ENCODE measurements at regions of chr5 and their contacts with region 1.

Region 1: GRCh38 chr5:14644623-14645237 is 19.8 kb upstream of the OTULIN start:
- DNase-seq: no peak
- H3K4me3 Mint-ChIP-seq: no peak overlapping the region
- H3K27ac Mint-ChIP-seq: no peak overlapping the region
- H3K4me1 Mint-ChIP-seq: peaks cover 2% of the 10 kb centered on the region
- H3K27me3 Mint-ChIP-seq: peaks cover 9% of the 10 kb centered on the region

Region 2: GRCh38 chr5:14351845-14352712 is 292.7 kb before region 1 on chr5:
- CTCF ChIA-PET with region 1: interaction called, 40 read pairs
- intact Hi-C with region 1: loop called (anchors 1 kb)
- DNase-seq: peak; percentile 68
- H3K4me3 Mint-ChIP-seq: no peak overlapping the region
- H3K27ac Mint-ChIP-seq: no peak overlapping the region
- H3K4me1 Mint-ChIP-seq: no peaks in the 10 kb centered on the region
- H3K27me3 Mint-ChIP-seq: no peaks in the 10 kb centered on the region

Region 3: DNA sequence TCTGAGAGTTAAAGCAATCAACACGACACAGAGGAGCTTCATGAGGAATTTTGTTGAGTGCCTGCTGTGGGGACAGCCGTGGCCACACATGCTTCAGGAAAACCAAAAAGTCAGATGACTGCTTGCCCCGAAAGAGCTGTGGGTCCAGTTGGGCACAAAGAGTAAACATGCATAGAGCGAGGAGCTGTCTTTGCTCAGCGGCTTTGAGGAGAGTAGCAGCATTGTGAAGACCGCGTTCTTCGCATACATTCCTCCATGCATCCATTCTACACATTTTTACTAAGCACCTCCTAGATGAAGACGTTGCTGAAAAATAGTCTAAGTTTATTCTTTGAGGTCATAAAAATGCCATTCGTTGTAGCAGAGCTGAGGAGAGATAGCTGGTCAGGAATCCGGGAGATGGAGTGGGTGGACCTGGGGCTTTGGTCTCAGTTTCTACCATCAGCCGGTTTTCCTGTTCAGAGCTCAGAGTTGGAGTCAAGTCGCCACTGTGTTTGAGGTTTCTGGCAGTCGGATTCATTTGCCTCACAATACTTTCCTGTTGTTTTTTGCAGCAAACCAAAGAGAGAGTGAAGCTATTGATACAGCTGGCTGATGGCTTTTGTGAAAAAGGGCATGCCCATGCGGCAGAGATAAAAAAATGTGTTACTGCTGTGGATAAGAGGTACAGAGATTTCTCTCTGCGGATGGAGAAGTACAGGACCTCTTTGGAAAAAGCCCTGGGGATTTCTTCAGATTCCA is 257.7 kb before region 1 on chr5:
- CTCF ChIA-PET with region 1: interaction called, 15 read pairs
- intact Hi-C with region 1: no loop called
- DNase-seq: no peak
- H3K4me3 Mint-ChIP-seq: no peak overlapping the region
- H3K27ac Mint-ChIP-seq: no peak overlapping the region
- H3K4me1 Mint-ChIP-seq: no peaks in the 10 kb centered on the region
- H3K27me3 Mint-ChIP-seq: no peaks in the 10 kb centered on the region

Region 4: GRCh38 chr5:14581333-14581890 is 63.3 kb before region 1 on chr5 and contains the start of gene OTULINL:
- CTCF ChIA-PET with region 1: interaction called, 18 read pairs
- intact Hi-C with region 1: loop called (anchors 5 kb)
- DNase-seq: peak; percentile 91
- H3K4me3 Mint-ChIP-seq: peak within 1 kb of the TSS; percentile 75
- H3K27ac Mint-ChIP-seq: peak within 1 kb of the TSS; percentile 70
- H3K4me1 Mint-ChIP-seq: peaks cover 26% of the 10 kb centered on the region
- H3K27me3 Mint-ChIP-seq: peaks cover 2% of the 10 kb centered on the region
- total RNA-seq, gene OTULINL: 9.1 to 10.6 TPM

Region 5: DNA sequence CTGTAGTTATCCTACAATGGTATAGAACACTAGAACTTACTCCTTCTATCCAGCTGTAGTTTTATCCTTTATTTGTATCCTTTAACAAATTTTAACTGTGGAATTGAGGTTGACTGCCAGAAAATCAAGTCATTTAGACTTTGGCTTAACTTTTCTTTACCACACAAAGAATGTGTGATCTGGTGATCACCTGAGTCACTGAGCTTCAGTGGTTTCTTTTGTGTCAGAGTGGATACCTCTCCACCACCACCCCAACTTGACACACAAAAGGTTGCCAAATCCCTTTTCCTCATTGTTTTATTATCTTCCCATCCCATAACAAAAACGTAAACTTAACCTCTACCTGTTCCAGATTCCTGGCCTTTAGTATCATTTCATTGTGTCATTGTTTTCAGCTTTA is 25.2 kb after region 1 on chr5:
- CTCF ChIA-PET with region 1: interaction called, 10 read pairs
- intact Hi-C with region 1: no loop called
- DNase-seq: peak; percentile 31
- H3K4me3 Mint-ChIP-seq: no peak overlapping the region
- H3K27ac Mint-ChIP-seq: peak overlapping the region; percentile 70
- H3K4me1 Mint-ChIP-seq: peaks cover 79% of the 10 kb centered on the region
- H3K27me3 Mint-ChIP-seq: no peaks in the 10 kb centered on the region

Region 6: DNA sequence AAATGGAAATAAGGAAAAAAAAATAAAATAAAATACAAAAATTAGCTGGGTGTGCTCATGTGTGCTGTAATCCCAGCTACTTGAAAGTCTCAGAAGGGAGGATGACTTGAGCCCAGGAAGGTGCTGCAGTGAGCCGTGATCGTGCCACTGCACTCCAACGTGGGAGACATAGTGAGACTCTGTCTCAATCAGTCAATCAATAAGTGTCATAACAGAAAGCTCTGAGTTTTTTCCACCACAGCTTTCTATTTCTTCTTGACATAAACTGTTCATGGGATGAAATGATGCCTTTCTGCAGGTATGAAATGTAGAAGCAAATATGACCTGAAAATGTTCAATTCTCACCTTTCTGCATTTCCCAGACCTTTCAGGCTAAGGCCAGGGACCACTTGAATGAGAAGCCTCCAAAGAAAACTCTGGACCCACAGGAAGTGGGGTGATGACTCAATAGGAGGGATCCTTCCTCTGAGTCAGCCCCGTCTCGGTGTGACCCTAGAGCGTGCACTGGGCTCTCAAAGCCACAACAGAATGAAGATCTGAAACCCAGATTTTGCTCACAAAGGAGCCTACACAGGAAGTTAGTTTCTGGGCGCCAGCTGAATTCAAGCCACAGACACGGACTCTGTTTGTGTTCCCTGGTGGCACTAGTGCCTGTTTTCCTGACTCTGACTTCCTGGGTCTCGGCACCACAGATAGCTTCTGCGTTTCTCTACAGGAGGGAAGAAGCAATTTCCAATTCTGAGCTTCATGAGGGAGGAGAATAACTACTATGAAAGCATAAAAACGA is 164.8 kb after region 1 on chr5:
- CTCF ChIA-PET with region 1: no interaction called
- intact Hi-C with region 1: no loop called
- DNase-seq: peak; percentile 89
- H3K4me3 Mint-ChIP-seq: peak overlapping the region; percentile 55
- H3K27ac Mint-ChIP-seq: peak overlapping the region; percentile 69
- H3K4me1 Mint-ChIP-seq: peaks cover 53% of the 10 kb centered on the region
- H3K27me3 Mint-ChIP-seq: no peaks in the 10 kb centered on the region

Measured in activated naive CD4-positive, alpha-beta T cell treated with anti-CD3 and anti-CD28 coated beads for 36 hours (primary cell).